T-cell (primary cell): ENCODE measurements at regions of chr19 and their contacts with region 1.

Region 1: GRCh38 chr19:3539743-3540118 is 757 bp downstream of the TEKTIP1 start:
- DNase-seq: no peak
- ATAC-seq: no peak
- H3K4me3 ChIP-seq: no peak overlapping the region
- H3K4me3 Mint-ChIP-seq: no peak overlapping the region
- H3K27ac ChIP-seq: no peak overlapping the region
- H3K27ac Mint-ChIP-seq: no peak overlapping the region
- H3K4me1 ChIP-seq: peaks cover 0 to 1% of the 10 kb centered on the region in 2 experiments
- H3K4me1 Mint-ChIP-seq: no peaks in the 10 kb centered on the region
- H3K27me3 ChIP-seq: no peaks in the 10 kb centered on the region
- H3K27me3 Mint-ChIP-seq: no peaks in the 10 kb centered on the region

Region 2: GRCh38 chr19:3563745-3564524 is 24.2 kb after region 1 on chr19:
- CTCF ChIA-PET with region 1: no interaction called
- POLR2A ChIA-PET with region 1: no interaction called
- DNase-seq: no peak
- ATAC-seq: no peak
- H3K4me3 ChIP-seq: no peak overlapping the region
- H3K4me3 Mint-ChIP-seq: no peak overlapping the region
- H3K27ac ChIP-seq: no peak overlapping the region
- H3K27ac Mint-ChIP-seq: no peak overlapping the region
- H3K4me1 ChIP-seq: no peaks in the 10 kb centered on the region
- H3K4me1 Mint-ChIP-seq: no peaks in the 10 kb centered on the region
- H3K27me3 ChIP-seq: no peaks in the 10 kb centered on the region
- H3K27me3 Mint-ChIP-seq: no peaks in the 10 kb centered on the region

Region 3: GRCh38 chr19:3599776-3600183 is 60.0 kb after region 1 on chr19:
- CTCF ChIA-PET with region 1: interaction called in 1 of 2 experiments, 12 read pairs
- POLR2A ChIA-PET with region 1: no interaction called
- DNase-seq: no peak
- ATAC-seq: no peak
- H3K4me3 ChIP-seq: no peak overlapping the region
- H3K4me3 Mint-ChIP-seq: no peak overlapping the region
- H3K27ac ChIP-seq: no peak overlapping the region
- H3K27ac Mint-ChIP-seq: no peak overlapping the region
- H3K4me1 ChIP-seq: peaks cover 2 to 12% of the 10 kb centered on the region in 2 experiments
- H3K4me1 Mint-ChIP-seq: no peaks in the 10 kb centered on the region
- H3K27me3 ChIP-seq: peaks cover 0 to 14% of the 10 kb centered on the region in 2 experiments
- H3K27me3 Mint-ChIP-seq: no peaks in the 10 kb centered on the region